Left lung (tissue), 14 donors: ENCODE measurements at regions of chr9 and their contacts with region 1.

Region 1: DNA sequence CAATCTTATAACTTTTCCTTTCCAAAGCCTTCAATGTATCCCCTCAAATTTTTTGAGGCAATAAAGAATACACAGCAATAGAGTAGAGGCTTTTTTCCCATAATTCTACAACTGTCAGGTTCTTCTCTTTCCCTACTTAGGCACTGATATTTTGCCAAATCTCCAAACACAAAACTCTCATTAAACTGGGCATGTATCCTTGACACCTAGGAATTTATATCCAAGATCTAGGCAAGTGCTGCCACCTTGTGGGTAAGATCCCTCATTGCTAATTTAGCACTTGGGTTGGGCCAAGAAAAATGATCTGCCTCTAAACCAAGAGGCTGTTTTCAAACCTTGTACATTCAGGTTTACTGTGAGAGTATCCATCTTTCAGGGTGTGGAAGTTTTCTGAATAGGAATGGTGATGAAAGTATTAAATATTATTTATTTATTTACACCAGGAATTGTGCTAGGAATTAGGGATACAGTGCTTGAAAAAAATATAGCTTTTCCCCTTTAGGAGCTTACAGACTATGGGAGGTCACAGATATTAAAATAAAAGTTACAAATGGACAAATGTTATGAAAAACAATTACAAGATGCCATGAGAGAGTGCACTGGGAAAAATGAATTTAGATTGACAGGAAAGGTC is 17.6 kb downstream of the TSTD2 start:
- DNase-seq: peak in 1 of 4 donors; percentile 66
- ATAC-seq: peak; percentile 93
- H3K4me3 ChIP-seq: no peak overlapping the region
- H3K27ac ChIP-seq: no peak overlapping the region
- H3K4me1 ChIP-seq: no peaks in the 10 kb centered on the region
- H3K27me3 ChIP-seq: no peaks in the 10 kb centered on the region
- CTCF ChIP-seq: peak; percentile 72 to 79

Region 2: GRCh38 chr9:97411789-97412625 is 203.5 kb before region 1 on chr9 and contains the start of gene TDRD7:
- intact Hi-C with region 1: loop called in 1 of 2 experiments (anchors 10 kb)
- DNase-seq: peak; percentile 63 to 98 (median 88)
- ATAC-seq: peak; percentile 96
- H3K4me3 ChIP-seq: peak within 1 kb of the TSS; percentile 98 to 99
- H3K27ac ChIP-seq: peak within 1 kb of the TSS; percentile 85 to 94
- H3K4me1 ChIP-seq: peaks cover 0 to 27% of the 10 kb centered on the region in 2 donors
- H3K27me3 ChIP-seq: no peaks in the 10 kb centered on the region
- CTCF ChIP-seq: peak; percentile 99
- polyA plus RNA-seq, gene TDRD7: 6.3 to 7.7 (median 7.2) TPM